ENCODE measurements at regions of chr15 and their contacts with region 1.

Region 1: DNA sequence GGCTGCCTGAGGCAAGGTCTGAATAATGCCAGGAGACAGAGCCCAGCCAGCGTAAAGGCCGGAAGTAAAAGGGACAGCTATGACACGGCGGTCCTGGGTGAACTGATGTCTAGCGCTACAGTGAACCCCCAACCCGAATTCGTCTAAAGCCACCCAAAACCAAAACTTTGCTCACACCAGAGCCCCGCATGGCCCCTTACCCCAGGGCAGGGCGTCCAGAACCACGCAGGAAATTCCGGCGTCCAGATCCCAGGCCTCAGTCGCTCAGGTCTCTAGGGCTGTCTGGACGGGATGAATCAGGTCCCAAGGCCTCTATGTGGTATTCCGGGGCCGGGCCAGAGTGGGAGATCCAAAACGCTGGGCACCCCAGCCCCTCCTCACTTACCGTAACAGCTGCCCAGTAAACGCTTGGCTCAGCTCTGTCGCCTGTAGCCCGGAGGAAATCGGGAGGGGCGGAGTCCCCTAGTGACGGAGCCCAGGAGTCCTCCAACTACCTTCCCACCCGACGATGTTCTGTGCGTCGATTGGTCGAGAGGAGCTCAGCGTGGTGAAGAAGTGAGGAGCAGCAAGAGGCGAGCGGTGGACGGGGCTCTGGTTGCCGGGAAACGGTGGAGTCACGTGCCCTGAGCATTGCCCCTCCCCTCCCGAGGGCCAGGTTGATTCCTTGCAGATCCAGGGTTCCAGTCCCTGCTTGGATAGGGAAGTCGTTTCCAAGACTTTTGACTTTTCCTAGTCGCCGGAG is at the start of gene CCDC32:
- DNase-seq: peak; percentile 94 to 98
- ATAC-seq: peak; percentile 97 to 99 (median 98)
- H3K4me3 ChIP-seq: peak within 1 kb of the TSS; percentile 24 to 95 (median 82)
- H3K27ac ChIP-seq: peak within 1 kb of the TSS; percentile 72 to 97 (median 92)
- H3K4me1 ChIP-seq: peaks cover 0 to 50% (median 22%) of the 10 kb centered on the region in 9 donors
- H3K27me3 ChIP-seq: no peaks in the 10 kb centered on the region
- CTCF ChIP-seq: peak in 1 of 9 donors; percentile 16
- total RNA-seq, gene CCDC32: 16.0 to 30.1 (median 21.6) TPM

Region 2: DNA sequence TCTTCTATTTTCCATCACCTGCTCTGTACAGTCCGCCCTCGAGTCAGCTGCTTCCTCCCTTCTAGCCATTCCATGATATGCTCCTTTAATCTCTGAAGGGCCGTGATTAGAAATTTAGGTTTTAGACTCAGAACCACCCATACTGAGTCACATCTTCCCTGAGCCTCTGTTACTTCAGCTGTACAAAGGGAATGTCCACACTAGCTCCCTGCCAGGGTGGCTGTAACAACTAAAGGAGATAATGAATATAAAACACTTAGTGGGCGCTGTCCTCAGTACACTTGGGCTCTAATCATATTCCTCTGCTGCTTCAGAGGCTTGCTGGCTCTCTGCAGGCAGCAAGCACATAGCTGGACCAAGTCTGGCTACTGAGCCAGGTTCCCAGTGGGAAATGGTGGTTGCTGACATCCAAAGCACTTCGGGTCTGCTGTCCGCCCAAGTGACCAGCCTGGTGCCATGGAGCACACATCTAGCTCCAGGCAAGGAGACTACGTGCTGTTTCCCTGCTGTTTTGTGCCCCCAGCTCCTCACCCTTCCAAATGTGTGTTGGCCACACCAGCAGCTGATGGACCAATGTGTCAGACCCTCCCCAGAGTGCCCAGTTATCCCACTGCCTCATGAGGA is 94.9 kb before region 1 on chr15:
- intact Hi-C with region 1: loop called in 1 of 10 experiments (anchors 10 kb)
- DNase-seq: no peak
- ATAC-seq: peak in 3 of 8 donors; percentile 6 to 7 (median 6)
- H3K4me3 ChIP-seq: peak overlapping the region in 7 of 10 donors; percentile 79 to 100 (median 94)
- H3K27ac ChIP-seq: peak overlapping the region in 9 of 10 donors; percentile 88 to 95 (median 93)
- H3K4me1 ChIP-seq: peaks cover 6 to 26% (median 20%) of the 10 kb centered on the region in 9 donors
- H3K27me3 ChIP-seq: no peaks in the 10 kb centered on the region
- CTCF ChIP-seq: no peak

Region 3: GRCh38 chr15:40600956-40601355 is 36.2 kb after region 1 on chr15:
- intact Hi-C with region 1: no loop called
- DNase-seq: no peak
- ATAC-seq: no peak
- H3K4me3 ChIP-seq: no peak overlapping the region
- H3K27ac ChIP-seq: no peak overlapping the region
- H3K4me1 ChIP-seq: peaks cover 0 to under 1% (median 0%) of the 10 kb centered on the region in 9 donors
- H3K27me3 ChIP-seq: no peaks in the 10 kb centered on the region
- CTCF ChIP-seq: no peak

Measured in heart right ventricle (tissue), 16 donors.